IMR-90 (cell line): ENCODE measurements at regions of chr15 and their contacts with region 1.

Region 1: GRCh38 chr15:99371180-99372103 is 120.2 kb downstream of the LRRC28 start:
- DNase-seq: peak; percentile 23
- ATAC-seq: no peak
- H3K4me3 ChIP-seq: no peak overlapping the region
- H3K27ac ChIP-seq: no peak overlapping the region; the same call in 1 of the 2 replicates
- H3K4me1 ChIP-seq: 0 out of 2 replicates have a peak, but pooled peaks cover 2% of the 10 kb centered on the region
- H3K27me3 ChIP-seq: no peaks in the 10 kb centered on the region
- CTCF ChIP-seq: 0 out of 2 replicates have a peak, but pooled peaks have one; percentile 10
- POLR2A ChIP-seq: no peak
- RAD21 ChIP-seq: peak; percentile 32

Region 2: GRCh38 chr15:99123706-99124451 is 247.6 kb before region 1 on chr15:
- CTCF ChIA-PET with region 1: no interaction called
- POLR2A ChIA-PET with region 1: no interaction called
- dilution Hi-C with region 1: no loop called
- in situ Hi-C with region 1: no loop called
- intact Hi-C with region 1: no loop called
- DNase-seq: peak; percentile 96
- ATAC-seq: peak; percentile 93
- H3K4me3 ChIP-seq: no peak overlapping the region
- H3K27ac ChIP-seq: peak overlapping the region; percentile 91
- H3K4me1 ChIP-seq: peaks cover 14% of the 10 kb centered on the region
- H3K27me3 ChIP-seq: no peaks in the 10 kb centered on the region
- CTCF ChIP-seq: no peak
- POLR2A ChIP-seq: no peak
- RAD21 ChIP-seq: no peak

Region 3: GRCh38 chr15:99135194-99135593 is 236.2 kb before region 1 on chr15:
- CTCF ChIA-PET with region 1: no interaction called
- POLR2A ChIA-PET with region 1: no interaction called
- dilution Hi-C with region 1: no loop called
- in situ Hi-C with region 1: no loop called
- intact Hi-C with region 1: no loop called
- DNase-seq: peak; percentile 47
- ATAC-seq: peak; percentile 65
- H3K4me3 ChIP-seq: no peak overlapping the region
- H3K27ac ChIP-seq: no peak overlapping the region
- H3K4me1 ChIP-seq: peaks cover 5% of the 10 kb centered on the region
- H3K27me3 ChIP-seq: no peaks in the 10 kb centered on the region
- CTCF ChIP-seq: no peak
- POLR2A ChIP-seq: no peak
- RAD21 ChIP-seq: no peak

Region 4: GRCh38 chr15:99213187-99213811 is 158.1 kb before region 1 on chr15:
- CTCF ChIA-PET with region 1: no interaction called
- POLR2A ChIA-PET with region 1: no interaction called
- dilution Hi-C with region 1: no loop called
- in situ Hi-C with region 1: no loop called
- intact Hi-C with region 1: no loop called
- DNase-seq: peak; percentile 67
- ATAC-seq: peak; percentile 79
- H3K4me3 ChIP-seq: no peak overlapping the region
- H3K27ac ChIP-seq: no peak overlapping the region
- H3K4me1 ChIP-seq: no peaks in the 10 kb centered on the region
- H3K27me3 ChIP-seq: no peaks in the 10 kb centered on the region
- CTCF ChIP-seq: peak; percentile 96
- POLR2A ChIP-seq: no peak; the same call in 1 of the 2 replicates
- RAD21 ChIP-seq: peak; percentile 97

Region 5: GRCh38 chr15:99305761-99306505 is 65.5 kb before region 1 on chr15:
- CTCF ChIA-PET with region 1: no interaction called
- POLR2A ChIA-PET with region 1: no interaction called
- dilution Hi-C with region 1: no loop called
- in situ Hi-C with region 1: no loop called
- intact Hi-C with region 1: loop called (anchors 5 kb)
- DNase-seq: peak; percentile 87
- ATAC-seq: peak; percentile 71
- H3K4me3 ChIP-seq: no peak overlapping the region
- H3K27ac ChIP-seq: no peak overlapping the region
- H3K4me1 ChIP-seq: peaks cover 5% of the 10 kb centered on the region
- H3K27me3 ChIP-seq: no peaks in the 10 kb centered on the region
- CTCF ChIP-seq: no peak
- POLR2A ChIP-seq: no peak
- RAD21 ChIP-seq: no peak

Region 6: DNA sequence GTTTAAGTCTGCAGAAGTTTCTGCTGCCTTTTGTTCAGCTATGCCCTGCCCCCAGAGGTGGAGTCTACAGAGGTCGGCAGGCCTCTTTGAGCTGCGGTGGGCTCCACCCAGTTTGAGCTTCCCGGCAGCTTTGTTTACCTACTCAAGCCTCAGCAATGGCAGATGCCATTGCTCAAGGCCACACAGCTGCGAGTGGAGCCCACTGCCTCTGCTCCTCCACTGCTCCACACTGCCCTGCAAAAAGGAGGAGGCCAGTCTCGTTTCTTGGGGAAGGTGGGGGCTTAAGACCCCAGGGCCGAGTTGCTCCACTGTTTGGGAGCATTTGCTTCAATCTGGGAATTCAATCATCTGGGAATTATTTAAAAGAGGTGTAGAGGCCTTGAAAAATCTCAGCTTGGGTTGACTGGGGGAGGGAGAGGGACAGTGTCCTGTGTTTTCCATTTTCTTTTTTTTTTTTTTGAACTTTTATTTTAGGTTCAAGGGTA is 49.8 kb after region 1 on chr15:
- CTCF ChIA-PET with region 1: no interaction called
- POLR2A ChIA-PET with region 1: no interaction called
- dilution Hi-C with region 1: no loop called
- in situ Hi-C with region 1: no loop called
- intact Hi-C with region 1: no loop called
- DNase-seq: peak; percentile 39
- ATAC-seq: peak; percentile 55
- H3K4me3 ChIP-seq: no peak overlapping the region
- H3K27ac ChIP-seq: peak overlapping the region; percentile 33; the same call in 1 of the 2 replicates
- H3K4me1 ChIP-seq: peaks cover 13% of the 10 kb centered on the region
- H3K27me3 ChIP-seq: no peaks in the 10 kb centered on the region
- CTCF ChIP-seq: no peak
- POLR2A ChIP-seq: no peak
- RAD21 ChIP-seq: no peak